Heart right ventricle (tissue), 16 donors: ENCODE measurements at regions of chr10 and their contacts with region 1.

Region 1: DNA sequence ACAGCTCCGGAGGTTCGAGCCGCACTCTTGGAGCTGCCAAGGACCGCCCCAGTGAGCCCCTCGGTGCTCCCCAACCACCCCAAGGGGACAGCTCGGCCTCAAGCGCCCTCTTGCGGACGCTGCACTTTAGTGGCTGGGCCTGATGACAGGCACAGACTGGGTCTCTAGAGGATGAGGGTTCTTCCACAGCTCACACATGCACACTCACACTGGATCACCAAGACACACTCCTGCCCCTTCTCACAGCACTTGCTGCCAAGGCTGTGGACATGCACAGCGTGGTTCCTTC is 2.1 kb downstream of the RET start:
- DNase-seq: peak; percentile 21 to 63
- ATAC-seq: peak; percentile 32 to 62 (median 46)
- H3K4me3 ChIP-seq: peak overlapping the region in 1 of 10 donors; percentile 63
- H3K27ac ChIP-seq: no peak overlapping the region
- H3K4me1 ChIP-seq: peaks cover 0 to 20% (median 8%) of the 10 kb centered on the region in 9 donors
- H3K27me3 ChIP-seq: peaks cover 4 to 94% (median 76%) of the 10 kb centered on the region in 7 donors
- CTCF ChIP-seq: peak in 8 of 9 donors; percentile 27 to 66 (median 60)

Region 2: GRCh38 chr10:42866115-42866995 is 212.6 kb before region 1 on chr10:
- intact Hi-C with region 1: loop called in 3 of 10 experiments (anchors 5 to 10 kb)
- DNase-seq: peak; percentile 75 to 87
- ATAC-seq: peak; percentile 99 to 100 (median 100)
- H3K4me3 ChIP-seq: peak overlapping the region in 9 of 10 donors; percentile 3 to 42 (median 29)
- H3K27ac ChIP-seq: no peak overlapping the region
- H3K4me1 ChIP-seq: peaks cover 2 to 19% (median 15%) of the 10 kb centered on the region in 9 donors
- H3K27me3 ChIP-seq: peaks cover 0 to 52% (median 44%) of the 10 kb centered on the region in 7 donors
- CTCF ChIP-seq: peak; percentile 65 to 88 (median 77)

Region 3: GRCh38 chr10:42875792-42876460 is 203.0 kb before region 1 on chr10:
- intact Hi-C with region 1: loop called in 2 of 10 experiments (anchors 10 kb)
- DNase-seq: no peak
- ATAC-seq: peak in 5 of 8 donors; percentile 28 to 61 (median 38)
- H3K4me3 ChIP-seq: no peak overlapping the region
- H3K27ac ChIP-seq: no peak overlapping the region
- H3K4me1 ChIP-seq: peaks cover 0 to 26% (median 13%) of the 10 kb centered on the region in 9 donors
- H3K27me3 ChIP-seq: peaks cover 0 to 54% (median 24%) of the 10 kb centered on the region in 7 donors
- CTCF ChIP-seq: no peak

Region 4: DNA sequence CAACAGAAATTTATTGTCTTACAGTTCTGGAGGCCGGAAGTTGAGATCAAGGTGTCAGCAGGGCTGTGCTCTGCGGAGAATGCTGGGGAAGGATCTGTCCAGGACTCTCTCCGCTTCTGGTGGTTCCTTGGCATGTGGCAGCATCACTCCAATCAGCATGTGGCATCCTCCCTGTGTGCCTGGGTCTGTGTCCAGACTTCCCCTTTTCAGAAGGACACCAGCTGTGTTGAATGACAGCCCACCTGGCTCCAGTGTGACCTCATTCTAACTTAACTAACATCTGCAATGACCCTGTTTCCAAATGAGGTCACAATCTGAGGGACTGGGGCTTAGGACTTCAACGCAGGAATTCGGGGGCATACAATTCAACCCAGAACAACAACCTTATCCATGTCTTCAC is 154.4 kb before region 1 on chr10:
- intact Hi-C with region 1: no loop called
- DNase-seq: no peak
- ATAC-seq: no peak
- H3K4me3 ChIP-seq: no peak overlapping the region
- H3K27ac ChIP-seq: no peak overlapping the region
- H3K4me1 ChIP-seq: no peaks in the 10 kb centered on the region
- H3K27me3 ChIP-seq: peaks cover 0 to 41% (median 11%) of the 10 kb centered on the region in 7 donors
- CTCF ChIP-seq: no peak

Region 5: GRCh38 chr10:42960491-42960990 is 118.4 kb before region 1 on chr10:
- intact Hi-C with region 1: loop called in 1 of 10 experiments (anchors 10 kb)
- DNase-seq: no peak
- ATAC-seq: peak; percentile 22 to 82 (median 60)
- H3K4me3 ChIP-seq: no peak overlapping the region
- H3K27ac ChIP-seq: peak overlapping the region in 8 of 10 donors; percentile 2 to 69 (median 52)
- H3K4me1 ChIP-seq: peaks cover 0 to 39% (median 26%) of the 10 kb centered on the region in 9 donors
- H3K27me3 ChIP-seq: no peaks in the 10 kb centered on the region
- CTCF ChIP-seq: no peak

Region 6: GRCh38 chr10:43036481-43037428 is 42.2 kb before region 1 on chr10:
- intact Hi-C with region 1: no loop called
- DNase-seq: no peak
- ATAC-seq: no peak
- H3K4me3 ChIP-seq: no peak overlapping the region
- H3K27ac ChIP-seq: no peak overlapping the region
- H3K4me1 ChIP-seq: no peaks in the 10 kb centered on the region
- H3K27me3 ChIP-seq: no peaks in the 10 kb centered on the region
- CTCF ChIP-seq: no peak